PC-3 (cell line): ENCODE measurements at regions of chr14 and their contacts with region 1.

Region 1: GRCh38 chr14:28321475-28322244 is 444.9 kb upstream of the FOXG1 start:
- DNase-seq: peak; percentile 92
- ATAC-seq: peak; percentile 91
- H3K4me3 ChIP-seq: peak overlapping the region; percentile 54
- H3K27ac ChIP-seq: peak overlapping the region; percentile 86
- H3K4me1 ChIP-seq: peaks cover 37% of the 10 kb centered on the region
- H3K27me3 ChIP-seq: no peaks in the 10 kb centered on the region
- CTCF ChIP-seq: no peak

Region 2: GRCh38 chr14:28303248-28303647 is 18.4 kb before region 1 on chr14:
- CTCF ChIA-PET with region 1: no interaction called
- POLR2A ChIA-PET with region 1: no interaction called
- intact Hi-C with region 1: loop called (anchors 1 kb)
- DNase-seq: peak; percentile 91
- ATAC-seq: peak; percentile 96
- H3K4me3 ChIP-seq: no peak overlapping the region
- H3K27ac ChIP-seq: peak overlapping the region; percentile 73
- H3K4me1 ChIP-seq: peaks cover 30% of the 10 kb centered on the region
- H3K27me3 ChIP-seq: no peaks in the 10 kb centered on the region
- CTCF ChIP-seq: no peak

Region 3: GRCh38 chr14:28308734-28309133 is 12.9 kb before region 1 on chr14:
- CTCF ChIA-PET with region 1: no interaction called
- POLR2A ChIA-PET with region 1: no interaction called
- intact Hi-C with region 1: loop called (anchors 1 kb)
- DNase-seq: peak; percentile 87
- ATAC-seq: peak; percentile 99
- H3K4me3 ChIP-seq: 0 out of 2 replicates have a peak overlapping the region, but pooled peaks have one; percentile 22
- H3K27ac ChIP-seq: peak overlapping the region; percentile 63
- H3K4me1 ChIP-seq: peaks cover 30% of the 10 kb centered on the region
- H3K27me3 ChIP-seq: no peaks in the 10 kb centered on the region
- CTCF ChIP-seq: no peak

Region 4: GRCh38 chr14:28361486-28361885 is 39.8 kb after region 1 on chr14:
- CTCF ChIA-PET with region 1: no interaction called
- POLR2A ChIA-PET with region 1: no interaction called
- intact Hi-C with region 1: no loop called
- DNase-seq: no peak
- ATAC-seq: no peak
- H3K4me3 ChIP-seq: no peak overlapping the region
- H3K27ac ChIP-seq: no peak overlapping the region
- H3K4me1 ChIP-seq: no peaks in the 10 kb centered on the region
- H3K27me3 ChIP-seq: no peaks in the 10 kb centered on the region
- CTCF ChIP-seq: no peak

Region 5: DNA sequence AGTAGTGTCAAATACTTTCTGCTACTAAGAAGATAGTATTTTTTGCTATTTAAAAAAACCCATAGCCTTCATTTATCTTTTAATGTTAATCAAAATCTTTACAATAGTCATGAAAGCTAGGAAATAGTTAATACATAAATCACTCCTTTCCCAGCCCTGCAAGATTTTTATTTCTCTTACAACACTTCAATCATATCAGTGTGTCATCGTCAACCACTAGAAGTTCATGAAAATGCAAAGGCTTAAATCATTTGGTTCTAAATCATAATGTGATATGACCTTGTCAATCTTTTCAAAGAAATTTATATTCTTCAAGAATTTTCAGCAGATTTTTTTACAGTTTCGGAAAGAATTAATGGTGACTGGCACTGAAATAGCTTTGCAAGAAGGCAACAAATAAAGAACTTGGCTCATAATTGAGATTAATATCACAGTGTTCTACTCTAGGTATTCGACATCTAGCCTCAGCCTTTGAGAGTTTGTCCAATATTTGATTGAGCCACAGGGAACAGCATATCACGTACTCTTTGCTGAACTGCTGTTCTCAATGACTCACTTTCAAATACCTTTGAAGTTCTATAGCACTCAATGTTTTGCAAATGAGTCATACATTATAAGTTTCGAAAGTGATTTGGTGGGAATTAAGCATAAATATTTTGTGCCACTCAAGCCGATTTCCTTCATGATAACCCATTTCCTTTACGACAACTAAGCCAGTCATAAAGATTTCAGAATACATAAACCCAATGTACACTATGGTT is 61.0 kb after region 1 on chr14:
- CTCF ChIA-PET with region 1: no interaction called
- POLR2A ChIA-PET with region 1: no interaction called
- intact Hi-C with region 1: loop called (anchors 5 kb)
- DNase-seq: peak; percentile 96
- ATAC-seq: peak; percentile 99
- H3K4me3 ChIP-seq: peak overlapping the region; percentile 40
- H3K27ac ChIP-seq: peak overlapping the region; percentile 92
- H3K4me1 ChIP-seq: peaks cover 40% of the 10 kb centered on the region
- H3K27me3 ChIP-seq: no peaks in the 10 kb centered on the region
- CTCF ChIP-seq: no peak

Region 6: DNA sequence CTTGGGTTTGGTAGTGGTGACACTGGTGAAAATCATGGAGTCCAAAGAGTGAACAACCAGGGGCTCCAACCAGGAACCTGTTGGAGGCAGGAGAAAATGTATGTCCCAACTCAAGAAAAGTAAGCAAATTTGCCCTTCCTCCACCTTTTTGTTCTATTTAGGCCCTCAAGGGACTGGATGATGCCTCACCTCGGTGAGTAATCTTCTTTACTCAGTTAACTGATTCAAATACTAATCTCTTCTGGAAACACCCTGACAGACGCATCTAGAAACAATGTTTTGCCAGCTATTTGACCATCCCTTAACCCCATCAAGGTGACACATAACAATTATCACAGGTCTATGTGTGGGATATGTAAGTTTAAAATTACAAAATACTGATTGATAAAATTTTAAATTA is 172.5 kb after region 1 on chr14:
- CTCF ChIA-PET with region 1: no interaction called
- POLR2A ChIA-PET with region 1: no interaction called
- intact Hi-C with region 1: loop called (anchors 5 kb)
- DNase-seq: peak; percentile 96
- ATAC-seq: peak; percentile 90
- H3K4me3 ChIP-seq: peak overlapping the region; percentile 42
- H3K27ac ChIP-seq: peak overlapping the region; percentile 97
- H3K4me1 ChIP-seq: peaks cover 36% of the 10 kb centered on the region
- H3K27me3 ChIP-seq: no peaks in the 10 kb centered on the region
- CTCF ChIP-seq: no peak

Region 7: DNA sequence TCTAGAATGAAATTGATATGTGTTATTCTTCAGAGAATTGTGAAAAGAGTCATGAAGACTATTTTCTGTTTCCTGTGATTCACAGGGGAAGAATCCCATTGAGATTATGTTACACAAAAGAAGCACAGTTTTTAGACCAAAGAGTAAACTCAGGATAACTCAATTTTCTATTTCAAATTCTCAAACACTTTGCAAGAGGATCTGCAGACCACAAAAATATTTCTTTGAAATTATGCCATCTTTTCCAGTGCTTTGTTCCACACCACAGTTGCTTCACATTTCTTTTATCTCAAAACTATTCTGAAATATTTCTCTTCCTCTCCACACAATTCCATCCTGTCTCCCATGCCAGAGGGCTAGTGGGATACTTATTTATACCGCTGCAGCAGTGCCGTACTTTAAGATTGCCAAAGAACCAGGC is 256.1 kb after region 1 on chr14:
- CTCF ChIA-PET with region 1: no interaction called
- POLR2A ChIA-PET with region 1: no interaction called
- intact Hi-C with region 1: loop called (anchors 2 kb)
- DNase-seq: peak; percentile 95
- ATAC-seq: peak; percentile 82
- H3K4me3 ChIP-seq: peak overlapping the region; percentile 75
- H3K27ac ChIP-seq: peak overlapping the region; percentile 86
- H3K4me1 ChIP-seq: peaks cover 23% of the 10 kb centered on the region
- H3K27me3 ChIP-seq: no peaks in the 10 kb centered on the region
- CTCF ChIP-seq: no peak

Region 8: GRCh38 chr14:28608851-28609828 is 287.5 kb after region 1 on chr14:
- CTCF ChIA-PET with region 1: no interaction called
- POLR2A ChIA-PET with region 1: no interaction called
- intact Hi-C with region 1: loop called (anchors 5 kb)
- DNase-seq: peak; percentile 82
- ATAC-seq: peak; percentile 80
- H3K4me3 ChIP-seq: no peak overlapping the region
- H3K27ac ChIP-seq: no peak overlapping the region
- H3K4me1 ChIP-seq: peaks cover 5% of the 10 kb centered on the region; the same call in 1 of the 2 replicates
- H3K27me3 ChIP-seq: no peaks in the 10 kb centered on the region
- CTCF ChIP-seq: peak; percentile 97